ENCODE measurements at regions of chr15 and their contacts with region 1.

Region 1: GRCh38 chr15:52528991-52529926 is 579 bp upstream of the MYO5A start:
- DNase-seq: no peak
- ATAC-seq: peak; percentile 79
- H3K4me3 Mint-ChIP-seq: peak overlapping the region; percentile 73
- H3K27ac Mint-ChIP-seq: peak overlapping the region; percentile 79
- H3K4me1 Mint-ChIP-seq: peaks cover 23% of the 10 kb centered on the region
- H3K27me3 Mint-ChIP-seq: no peaks in the 10 kb centered on the region
- CTCF ChIP-seq: no peak

Region 2: GRCh38 chr15:52256366-52256765 is 272.9 kb before region 1 on chr15:
- CTCF ChIA-PET with region 1: interaction called, 3 read pairs
- POLR2A ChIA-PET with region 1: no interaction called
- intact Hi-C with region 1: loop called (anchors 1 kb)
- DNase-seq: peak; percentile 46
- ATAC-seq: peak; percentile 78
- H3K4me3 Mint-ChIP-seq: peak overlapping the region; percentile 60
- H3K27ac Mint-ChIP-seq: peak overlapping the region; percentile 68
- H3K4me1 Mint-ChIP-seq: peaks cover 48% of the 10 kb centered on the region
- H3K27me3 Mint-ChIP-seq: no peaks in the 10 kb centered on the region
- CTCF ChIP-seq: no peak

Region 3: GRCh38 chr15:52370010-52370409 is 159.2 kb before region 1 on chr15:
- CTCF ChIA-PET with region 1: no interaction called
- POLR2A ChIA-PET with region 1: no interaction called
- intact Hi-C with region 1: loop called (anchors 2 kb)
- DNase-seq: no peak
- ATAC-seq: peak; percentile 75
- H3K4me3 Mint-ChIP-seq: peak overlapping the region; percentile 55
- H3K27ac Mint-ChIP-seq: peak overlapping the region; percentile 78
- H3K4me1 Mint-ChIP-seq: peaks cover 11% of the 10 kb centered on the region
- H3K27me3 Mint-ChIP-seq: no peaks in the 10 kb centered on the region
- CTCF ChIP-seq: no peak

Region 4: DNA sequence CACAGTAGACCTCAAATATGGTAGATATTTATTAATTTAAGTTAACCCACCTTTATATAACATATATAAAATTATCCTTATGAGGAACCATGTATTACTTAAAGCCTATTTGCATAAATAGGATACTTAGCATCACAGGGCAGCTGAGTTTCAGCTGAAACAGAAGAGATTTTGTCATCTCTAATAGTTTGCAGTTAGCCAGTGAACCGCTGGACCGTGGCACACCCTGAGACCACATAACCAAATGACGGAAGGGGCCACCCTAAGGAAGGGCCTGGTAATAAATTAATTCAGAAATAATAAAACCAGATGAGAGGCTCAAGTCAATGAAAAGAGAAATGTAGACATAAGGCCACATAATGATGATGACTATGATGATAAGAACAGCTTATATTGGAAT is 108.2 kb before region 1 on chr15:
- CTCF ChIA-PET with region 1: no interaction called
- POLR2A ChIA-PET with region 1: no interaction called
- intact Hi-C with region 1: loop called (anchors 2 kb)
- DNase-seq: no peak
- ATAC-seq: peak; percentile 82
- H3K4me3 Mint-ChIP-seq: no peak overlapping the region
- H3K27ac Mint-ChIP-seq: no peak overlapping the region
- H3K4me1 Mint-ChIP-seq: peaks cover 19% of the 10 kb centered on the region
- H3K27me3 Mint-ChIP-seq: no peaks in the 10 kb centered on the region
- CTCF ChIP-seq: no peak

Region 5: GRCh38 chr15:52481915-52482314 is 47.3 kb before region 1 on chr15:
- CTCF ChIA-PET with region 1: no interaction called
- POLR2A ChIA-PET with region 1: interaction called, 5 read pairs
- intact Hi-C with region 1: loop called (anchors 1 kb)
- DNase-seq: no peak
- ATAC-seq: peak; percentile 99
- H3K4me3 Mint-ChIP-seq: peak overlapping the region; percentile 7
- H3K27ac Mint-ChIP-seq: peak overlapping the region; percentile 85
- H3K4me1 Mint-ChIP-seq: peaks cover 57% of the 10 kb centered on the region
- H3K27me3 Mint-ChIP-seq: no peaks in the 10 kb centered on the region
- CTCF ChIP-seq: no peak

Region 6: GRCh38 chr15:52518490-52519371 is 10.5 kb before region 1 on chr15:
- CTCF ChIA-PET with region 1: interaction called, 3 read pairs
- POLR2A ChIA-PET with region 1: no interaction called
- intact Hi-C with region 1: loop called (anchors 1 kb)
- DNase-seq: no peak
- ATAC-seq: no peak
- H3K4me3 Mint-ChIP-seq: no peak overlapping the region
- H3K27ac Mint-ChIP-seq: no peak overlapping the region
- H3K4me1 Mint-ChIP-seq: peaks cover 42% of the 10 kb centered on the region
- H3K27me3 Mint-ChIP-seq: no peaks in the 10 kb centered on the region
- CTCF ChIP-seq: no peak

Region 7: GRCh38 chr15:52546031-52546751 is 16.9 kb after region 1 on chr15:
- CTCF ChIA-PET with region 1: no interaction called
- POLR2A ChIA-PET with region 1: no interaction called
- intact Hi-C with region 1: no loop called
- DNase-seq: no peak
- ATAC-seq: no peak
- H3K4me3 Mint-ChIP-seq: no peak overlapping the region
- H3K27ac Mint-ChIP-seq: no peak overlapping the region
- H3K4me1 Mint-ChIP-seq: no peaks in the 10 kb centered on the region
- H3K27me3 Mint-ChIP-seq: no peaks in the 10 kb centered on the region
- CTCF ChIP-seq: no peak

Region 8: GRCh38 chr15:52735231-52736089 is 206.2 kb after region 1 on chr15:
- CTCF ChIA-PET with region 1: interaction called, 12 read pairs
- POLR2A ChIA-PET with region 1: no interaction called
- intact Hi-C with region 1: loop called (anchors 2 kb)
- DNase-seq: no peak
- ATAC-seq: peak; percentile 84
- H3K4me3 Mint-ChIP-seq: no peak overlapping the region
- H3K27ac Mint-ChIP-seq: no peak overlapping the region
- H3K4me1 Mint-ChIP-seq: peaks cover 18% of the 10 kb centered on the region
- H3K27me3 Mint-ChIP-seq: no peaks in the 10 kb centered on the region
- CTCF ChIP-seq: no peak

Measured in activated B cell treated with CpG ODN at 0.5 μM for 24 hours (primary cell).